HepG2 (cell line): ENCODE measurements at regions of chr6 and their contacts with region 1.

Region 1: GRCh38 chr6:44431118-44431725 is 43.7 kb downstream of the CDC5L start:
- DNase-seq: peak; percentile 58
- ATAC-seq: peak; percentile 90
- H3K4me3 ChIP-seq: no peak overlapping the region
- H3K27ac ChIP-seq: no peak overlapping the region
- H3K4me1 ChIP-seq: no peaks in the 10 kb centered on the region
- H3K27me3 ChIP-seq: no peaks in the 10 kb centered on the region
- CTCF ChIP-seq: peak; percentile 78
- EP300 ChIP-seq: no peak
- POLR2A ChIP-seq: no peak
- RAD21 ChIP-seq: peak; percentile 61; the same call in 1 of the 2 replicates

Region 2: GRCh38 chr6:44446628-44447306 is 15.5 kb after region 1 on chr6:
- CTCF ChIA-PET with region 1: no interaction called
- POLR2A ChIA-PET with region 1: no interaction called
- in situ Hi-C with region 1: no loop called
- intact Hi-C with region 1: loop called (anchors 1 kb)
- DNase-seq: peak; percentile 60
- ATAC-seq: peak; percentile 57; the same call in 2 of the 3 replicates
- H3K4me3 ChIP-seq: no peak overlapping the region
- H3K27ac ChIP-seq: no peak overlapping the region
- H3K4me1 ChIP-seq: peaks cover 15% of the 10 kb centered on the region
- H3K27me3 ChIP-seq: no peaks in the 10 kb centered on the region
- CTCF ChIP-seq: no peak
- EP300 ChIP-seq: no peak
- POLR2A ChIP-seq: no peak
- RAD21 ChIP-seq: no peak

Region 3: GRCh38 chr6:44456070-44456965 is 25.1 kb after region 1 on chr6:
- CTCF ChIA-PET with region 1: interaction called, 24 read pairs
- POLR2A ChIA-PET with region 1: no interaction called
- in situ Hi-C with region 1: no loop called
- intact Hi-C with region 1: loop called (anchors 1 kb)
- DNase-seq: peak; percentile 61
- ATAC-seq: peak; percentile 78
- H3K4me3 ChIP-seq: peak overlapping the region in 2 of 3 experiments; percentile 17 to 47; a peak in 3 of 6 replicates
- H3K27ac ChIP-seq: no peak overlapping the region
- H3K4me1 ChIP-seq: peaks cover 8% of the 10 kb centered on the region; the same call in 1 of the 2 replicates
- H3K27me3 ChIP-seq: peaks cover 1 to 8% of the 10 kb centered on the region in 2 experiments; a peak in 2 of 5 replicates
- CTCF ChIP-seq: peak; percentile 87
- EP300 ChIP-seq: no peak
- POLR2A ChIP-seq: no peak
- RAD21 ChIP-seq: peak; percentile 65; the same call in 1 of the 2 replicates